Mammary epithelial cell (primary cell): ENCODE measurements at regions of chr15 and their contacts with region 1.

Region 1: DNA sequence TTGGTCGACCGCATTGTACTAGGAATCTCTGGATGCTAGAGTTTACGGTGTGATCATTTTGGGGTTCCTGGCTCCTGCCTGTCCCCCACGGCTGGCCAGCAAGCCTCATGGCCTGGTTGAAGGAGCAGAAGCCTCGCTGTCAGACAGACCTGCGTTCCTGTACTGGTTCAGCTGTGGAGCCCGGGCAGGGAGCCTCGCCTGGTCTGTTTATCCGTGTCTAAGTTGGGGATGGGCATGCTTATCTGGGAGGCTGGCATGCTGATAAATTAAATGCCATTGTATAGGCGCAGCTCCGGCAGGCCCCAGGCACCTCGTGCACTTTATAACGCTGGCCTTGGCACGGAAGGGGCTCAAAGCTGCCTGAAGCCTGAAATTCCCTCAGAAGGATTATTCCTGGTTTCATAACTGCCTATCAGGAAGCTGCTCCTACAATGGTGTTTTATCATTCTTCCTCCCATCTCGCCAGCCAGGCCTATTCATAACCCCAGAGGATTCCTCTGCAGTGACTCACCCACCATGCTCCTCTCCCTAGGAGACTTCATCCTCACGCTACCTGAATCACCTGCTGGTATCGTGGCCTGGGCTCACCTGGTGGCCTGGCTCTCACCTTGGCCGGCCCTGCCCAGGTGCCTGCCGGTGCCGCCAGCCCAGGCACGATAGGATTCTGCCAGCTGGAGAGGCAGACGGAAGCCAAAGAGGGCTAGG is 110.9 kb downstream of the ASB7 start:
- DNase-seq: peak; percentile 100
- H3K4me3 ChIP-seq: no peak overlapping the region
- H3K27ac ChIP-seq: peak overlapping the region; percentile 99
- H3K4me1 ChIP-seq: peaks cover 33% of the 10 kb centered on the region
- H3K27me3 ChIP-seq: no peaks in the 10 kb centered on the region
- CTCF ChIP-seq: no peak

Region 2: DNA sequence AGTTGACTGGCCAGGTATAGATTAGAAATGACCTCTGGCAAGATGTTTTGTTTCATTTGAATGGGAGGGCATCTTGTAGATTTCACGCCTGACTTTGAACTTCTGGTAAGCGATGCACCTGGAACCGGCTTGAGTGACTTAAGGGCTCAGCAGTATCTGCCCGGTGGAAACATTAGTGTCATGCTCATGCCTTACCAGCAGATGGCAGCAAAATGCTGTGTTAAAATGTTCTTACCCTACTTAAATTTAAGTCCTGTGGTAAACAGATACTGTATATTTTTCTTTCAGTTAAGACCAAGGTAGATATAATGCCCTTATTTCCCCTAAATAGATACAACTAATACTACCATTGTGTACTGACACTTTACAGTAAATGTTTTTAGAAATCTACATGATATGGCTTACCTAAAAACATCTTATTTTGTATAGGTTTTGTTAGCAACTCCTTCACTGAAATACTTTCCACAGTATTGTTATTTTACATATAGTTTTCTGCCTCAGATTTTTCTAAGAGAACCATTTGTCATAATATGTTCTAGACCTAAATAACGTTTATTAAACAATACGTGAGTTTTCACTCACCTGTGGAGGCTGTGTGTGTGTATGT is 85.4 kb before region 1 on chr15:
- CTCF ChIA-PET with region 1: no interaction called
- dilution Hi-C with region 1: no loop called
- in situ Hi-C with region 1: no loop called
- intact Hi-C with region 1: loop called (anchors 1 kb)
- DNase-seq: peak; percentile 64
- H3K4me3 ChIP-seq: no peak overlapping the region
- H3K27ac ChIP-seq: peak overlapping the region; percentile 5
- H3K4me1 ChIP-seq: no peaks in the 10 kb centered on the region
- H3K27me3 ChIP-seq: no peaks in the 10 kb centered on the region
- CTCF ChIP-seq: peak; percentile 73

Region 3: DNA sequence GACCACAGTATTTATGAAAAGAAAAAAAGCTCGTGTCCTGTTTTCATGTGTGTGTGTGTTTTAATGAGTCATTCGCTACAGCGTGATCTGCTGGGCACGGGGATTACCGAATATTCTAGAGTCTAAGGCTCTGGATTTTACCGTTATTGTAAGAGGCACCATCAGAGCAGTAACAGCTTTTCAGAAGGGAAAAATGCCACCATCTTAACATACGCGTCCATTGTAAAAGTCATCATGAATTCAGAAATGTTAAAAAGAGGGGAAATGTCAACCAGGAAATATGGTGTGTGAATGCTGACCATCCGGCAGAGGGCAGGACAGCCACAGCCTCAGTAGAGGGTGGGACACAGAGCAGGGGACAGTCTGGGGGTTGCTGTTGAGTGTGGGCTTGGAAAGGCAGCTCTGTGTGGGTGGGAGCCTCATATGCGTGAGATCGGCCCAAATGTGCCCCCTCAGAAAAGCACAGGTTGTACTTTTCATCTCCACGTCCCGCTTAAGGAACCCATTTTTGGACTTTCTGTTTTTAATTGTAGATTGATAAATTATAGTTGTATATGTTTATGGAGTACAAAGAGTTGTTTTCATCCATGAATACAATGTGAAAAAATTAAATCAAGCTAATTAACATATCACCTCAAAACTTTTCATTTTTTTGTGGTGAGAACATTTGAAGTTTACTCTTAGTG is 41.3 kb before region 1 on chr15:
- CTCF ChIA-PET with region 1: no interaction called
- dilution Hi-C with region 1: no loop called
- in situ Hi-C with region 1: no loop called
- intact Hi-C with region 1: loop called (anchors 2 kb)
- DNase-seq: peak; percentile 49
- H3K4me3 ChIP-seq: no peak overlapping the region
- H3K27ac ChIP-seq: peak overlapping the region; percentile 37
- H3K4me1 ChIP-seq: peaks cover 7% of the 10 kb centered on the region
- H3K27me3 ChIP-seq: no peaks in the 10 kb centered on the region
- CTCF ChIP-seq: peak; percentile 44 to 66